Upper lobe of right lung (tissue), 1 donor: ENCODE measurements at regions of chr11 and their contacts with region 1.

Region 1: GRCh38 chr11:64894070-64894796 is 15.8 kb upstream of the EHD1 start:
- DNase-seq: peak; percentile 94
- ATAC-seq: peak; percentile 90
- H3K4me3 ChIP-seq: no peak overlapping the region
- H3K27ac ChIP-seq: no peak overlapping the region
- H3K4me1 ChIP-seq: peaks cover 6% of the 10 kb centered on the region
- H3K27me3 ChIP-seq: no peaks in the 10 kb centered on the region
- CTCF ChIP-seq: peak; percentile 90

Region 2: DNA sequence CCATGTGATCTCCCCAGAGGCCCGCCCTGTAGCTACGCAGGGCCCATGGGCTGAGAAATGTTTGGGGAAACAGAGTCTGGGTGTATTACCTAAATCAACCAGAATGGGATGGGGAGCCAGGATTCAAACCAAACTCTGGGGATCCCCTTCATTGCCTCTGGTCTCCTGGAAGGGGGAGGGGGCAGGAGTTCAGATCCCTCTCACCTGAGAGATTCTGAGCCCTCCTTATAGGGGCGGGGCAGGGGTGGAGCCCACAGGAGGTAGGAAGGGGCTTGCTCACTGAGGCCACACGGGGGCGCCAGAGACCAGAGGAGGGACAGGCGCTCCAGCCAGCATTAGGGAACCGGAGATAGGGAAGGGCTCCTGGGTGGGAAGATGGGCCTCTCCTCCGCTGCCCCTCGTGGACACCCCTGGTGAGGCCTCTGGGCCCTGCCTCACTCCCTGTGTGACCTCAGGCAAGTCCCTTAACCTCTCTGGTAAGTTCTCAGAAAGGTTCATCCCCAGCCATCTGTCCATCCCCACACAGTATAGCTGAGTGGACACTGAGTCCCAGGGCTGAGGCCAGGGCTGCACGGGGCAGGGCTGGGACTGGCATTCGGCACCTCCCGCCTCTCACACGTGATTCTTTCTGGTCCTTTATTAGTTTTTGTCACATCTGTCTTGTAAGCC is 47.1 kb before region 1 on chr11:
- intact Hi-C with region 1: loop called (anchors 5 kb)
- DNase-seq: peak; percentile 97
- ATAC-seq: peak; percentile 83
- H3K4me3 ChIP-seq: no peak overlapping the region
- H3K27ac ChIP-seq: no peak overlapping the region
- H3K4me1 ChIP-seq: peaks cover 44% of the 10 kb centered on the region
- H3K27me3 ChIP-seq: no peaks in the 10 kb centered on the region
- CTCF ChIP-seq: peak; percentile 99